IMR-90 (cell line): ENCODE measurements at regions of chr1 and their contacts with region 1.

Region 1: DNA sequence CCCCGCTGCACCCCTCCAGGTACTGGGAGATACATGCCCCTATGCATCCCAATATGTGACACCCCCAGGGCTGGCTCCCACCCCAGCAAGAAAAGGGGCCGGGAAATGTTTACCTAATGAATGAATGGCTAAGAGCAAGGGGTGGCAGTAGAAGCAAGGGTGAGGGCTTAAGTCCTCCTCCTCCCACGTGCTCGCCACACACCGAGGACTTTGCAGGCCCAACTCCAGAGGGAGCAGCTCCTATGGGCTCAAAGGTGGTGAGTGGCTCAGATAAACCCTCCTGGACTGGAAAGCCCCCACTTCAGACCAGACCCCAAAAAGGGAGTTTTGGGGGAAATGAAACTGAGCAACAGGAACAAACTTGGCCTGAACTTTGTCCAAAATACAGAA is 11.4 kb downstream of the SLC45A3 start:
- DNase-seq: no peak
- ATAC-seq: 0 out of 2 replicates have a peak, but pooled peaks have one; percentile 19
- H3K4me3 ChIP-seq: no peak overlapping the region
- H3K27ac ChIP-seq: no peak overlapping the region
- H3K4me1 ChIP-seq: peaks cover 10% of the 10 kb centered on the region
- H3K27me3 ChIP-seq: no peaks in the 10 kb centered on the region
- CTCF ChIP-seq: no peak
- POLR2A ChIP-seq: no peak
- RAD21 ChIP-seq: no peak

Region 2: DNA sequence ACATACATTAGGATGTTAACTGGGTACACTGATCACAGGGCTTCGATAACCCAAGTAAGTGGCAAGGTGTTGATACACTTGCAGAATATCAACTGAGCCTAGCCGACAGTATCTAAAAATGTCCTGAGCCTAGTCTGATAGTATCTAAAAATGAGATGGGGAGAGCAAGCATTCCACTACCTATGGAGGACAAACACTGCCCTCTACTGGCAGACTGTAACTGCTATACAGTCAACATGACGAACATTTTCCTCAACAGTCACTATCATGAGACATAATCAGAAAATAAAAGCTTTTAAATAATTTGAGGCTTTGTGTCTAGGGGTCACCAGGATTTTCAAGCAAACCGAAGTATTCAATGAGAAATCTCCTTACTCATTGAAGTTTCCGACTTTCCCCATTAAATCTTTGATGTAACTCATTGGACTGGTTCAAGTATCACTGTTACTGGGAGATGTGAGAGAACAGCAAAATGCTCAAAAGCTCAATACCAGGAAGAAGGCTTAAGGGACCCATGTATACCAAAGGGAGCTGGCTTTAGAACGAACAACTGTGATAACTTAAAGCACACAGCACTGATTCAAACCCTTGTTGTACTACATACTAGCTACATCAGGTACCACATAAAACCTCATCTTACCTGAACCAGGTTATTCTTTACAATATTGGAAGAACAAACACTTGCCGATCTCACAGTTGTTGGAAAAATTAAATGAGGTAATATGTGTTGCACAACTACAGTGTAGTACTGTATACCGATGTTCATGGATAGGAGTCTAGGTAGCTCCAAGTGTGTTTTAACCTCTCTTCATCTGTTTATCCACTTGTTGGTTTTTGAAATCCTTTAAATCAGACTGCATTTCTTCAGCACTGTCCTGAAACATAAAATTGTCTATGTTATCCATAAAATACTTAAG is 42.4 kb after region 1 on chr1:
- CTCF ChIA-PET with region 1: no interaction called
- POLR2A ChIA-PET with region 1: no interaction called
- dilution Hi-C with region 1: no loop called
- in situ Hi-C with region 1: loop called (anchors 5 kb)
- intact Hi-C with region 1: no loop called
- DNase-seq: peak; percentile 86
- ATAC-seq: peak; percentile 78
- H3K4me3 ChIP-seq: no peak overlapping the region
- H3K27ac ChIP-seq: no peak overlapping the region
- H3K4me1 ChIP-seq: peaks cover 8% of the 10 kb centered on the region
- H3K27me3 ChIP-seq: no peaks in the 10 kb centered on the region
- CTCF ChIP-seq: peak; percentile 93
- POLR2A ChIP-seq: no peak
- RAD21 ChIP-seq: peak; percentile 88